ENCODE measurements at regions of chr19 and their contacts with region 1.

Region 1: DNA sequence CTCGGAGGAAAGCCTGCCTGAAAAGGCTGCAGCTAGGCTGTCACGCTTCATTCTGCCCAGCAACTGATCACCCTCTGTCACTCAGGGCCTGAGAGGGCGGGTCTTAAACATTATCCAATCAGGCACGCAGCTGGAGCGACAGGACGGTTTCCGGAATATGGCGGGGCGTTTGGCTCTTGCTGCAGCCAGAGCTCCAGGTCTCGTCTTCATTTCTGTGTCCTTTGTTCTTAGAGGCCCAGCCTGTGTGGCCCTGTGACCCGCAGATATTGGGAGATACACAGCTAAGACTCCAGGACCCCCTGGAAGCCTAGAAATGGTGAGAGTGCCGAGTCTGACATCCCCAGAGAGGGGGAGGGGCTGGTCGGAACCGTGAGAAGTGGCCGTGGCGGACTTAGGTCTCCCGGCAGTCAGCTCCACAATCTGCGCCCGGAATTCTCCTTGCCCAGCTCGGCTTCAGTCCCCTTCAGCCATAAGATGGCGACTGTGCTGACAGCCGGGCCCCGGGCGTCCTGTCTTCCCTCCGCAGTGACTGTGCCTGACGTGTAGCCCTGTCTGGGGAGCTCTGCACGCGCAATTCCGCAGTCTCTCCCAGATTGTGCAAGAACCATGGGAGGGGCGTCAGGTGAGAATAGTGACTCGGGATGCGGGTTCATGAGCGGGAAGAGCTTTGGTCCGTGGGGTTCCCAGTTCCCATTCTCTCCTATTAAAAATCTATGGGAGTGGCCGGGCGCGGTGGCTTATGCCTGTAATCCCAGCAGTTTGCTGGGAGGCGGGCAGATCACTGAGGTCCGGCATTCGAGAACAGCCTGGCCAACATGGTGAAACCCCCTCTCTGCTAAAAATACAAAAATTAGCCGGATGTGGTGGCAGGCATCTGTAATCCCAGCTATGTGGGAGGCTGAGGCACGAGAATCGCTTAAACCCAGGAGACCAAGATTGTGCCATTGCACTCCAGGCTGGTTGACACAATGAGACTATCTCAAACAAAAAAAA is at the start of gene ZNF429:
- DNase-seq: peak; percentile 84
- H3K4me3 Mint-ChIP-seq: peak within 1 kb of the TSS; percentile 98
- H3K27ac Mint-ChIP-seq: peak within 1 kb of the TSS; percentile 89
- H3K4me1 Mint-ChIP-seq: peaks cover 9% of the 10 kb centered on the region
- H3K27me3 Mint-ChIP-seq: no peaks in the 10 kb centered on the region
- total RNA-seq, gene ZNF429: 2.6 and 3.2 TPM in 2 replicates

Region 2: GRCh38 chr19:21020298-21021227 is 485.2 kb before region 1 on chr19 and contains the start of gene ZNF430:
- intact Hi-C with region 1: loop called (anchors 1 kb)
- DNase-seq: peak; percentile 93
- H3K4me3 Mint-ChIP-seq: peak within 1 kb of the TSS; percentile 99
- H3K27ac Mint-ChIP-seq: peak within 1 kb of the TSS; percentile 98
- H3K4me1 Mint-ChIP-seq: peaks cover 26% of the 10 kb centered on the region
- H3K27me3 Mint-ChIP-seq: peaks cover 2% of the 10 kb centered on the region
- total RNA-seq, gene ZNF430: 20.3 and 21.5 TPM in 2 replicates

Region 3: GRCh38 chr19:21328885-21329605 is 176.7 kb before region 1 on chr19 and contains the start of gene ZNF708:
- intact Hi-C with region 1: loop called (anchors 1 kb)
- DNase-seq: peak; percentile 78
- H3K4me3 Mint-ChIP-seq: peak within 1 kb of the TSS; percentile 96
- H3K27ac Mint-ChIP-seq: peak within 1 kb of the TSS; percentile 98
- H3K4me1 Mint-ChIP-seq: peaks cover 13% of the 10 kb centered on the region
- H3K27me3 Mint-ChIP-seq: no peaks in the 10 kb centered on the region
- total RNA-seq, gene ZNF708: 9.6 and 9.9 TPM in 2 replicates

Region 4: GRCh38 chr19:21568816-21569493 is 63.2 kb after region 1 on chr19:
- intact Hi-C with region 1: loop called (anchors 1 kb)
- DNase-seq: peak; percentile 75
- H3K4me3 Mint-ChIP-seq: peak overlapping the region; percentile 92
- H3K27ac Mint-ChIP-seq: peak overlapping the region; percentile 78
- H3K4me1 Mint-ChIP-seq: peaks cover 5% of the 10 kb centered on the region
- H3K27me3 Mint-ChIP-seq: no peaks in the 10 kb centered on the region

Region 5: GRCh38 chr19:21835810-21836444 is 330.2 kb after region 1 on chr19 and contains the start of gene ZNF43:
- intact Hi-C with region 1: loop called (anchors 2 kb)
- DNase-seq: peak; percentile 87
- H3K4me3 Mint-ChIP-seq: peak within 1 kb of the TSS; percentile 98
- H3K27ac Mint-ChIP-seq: peak within 1 kb of the TSS; percentile 98
- H3K4me1 Mint-ChIP-seq: peaks cover 2% of the 10 kb centered on the region
- H3K27me3 Mint-ChIP-seq: peaks cover 2% of the 10 kb centered on the region
- total RNA-seq, gene ZNF43: 29.9 and 30.5 TPM in 2 replicates

Measured in activated T-helper 1 cell treated with anti-CD3 and anti-CD28 coated beads, Interleukin-12 subunit alpha, Interleukin-12 subunit beta, Interleukin-2, Interleukin-4 antibody, amounts not matched to agents 30 ng/mL and 10 ng/mL and 1 ng/mL, durations not matched to agents 14 hours and 24 hours and 36 hours (primary cell).